Naive thymus-derived CD8-positive, alpha-beta T cell (primary cell): ENCODE measurements at regions of chr18 and their contacts with region 1.

Region 1: GRCh38 chr18:67417864-67418523 is 98.5 kb downstream of the DSEL start:
- DNase-seq: peak in 6 of 10 donors; percentile 6 to 65 (median 33)
- ATAC-seq: peak; percentile 92 to 95
- H3K4me3 Mint-ChIP-seq: peak overlapping the region; percentile 68 to 86 (median 80)
- H3K27ac Mint-ChIP-seq: peak overlapping the region; percentile 24 to 92 (median 87)
- H3K4me1 Mint-ChIP-seq: peaks cover 3 to 14% (median 9%) of the 10 kb centered on the region in 4 donors
- H3K27me3 Mint-ChIP-seq: no peaks in the 10 kb centered on the region

Region 2: GRCh38 chr18:67363694-67364093 is 54.3 kb before region 1 on chr18:
- POLR2A ChIA-PET with region 1: interaction called, 11 read pairs
- DNase-seq: no peak
- ATAC-seq: no peak
- H3K4me3 Mint-ChIP-seq: no peak overlapping the region
- H3K27ac Mint-ChIP-seq: peak overlapping the region in 1 of 10 donors; percentile 76
- H3K4me1 Mint-ChIP-seq: peaks cover 0 to 11% (median 6%) of the 10 kb centered on the region in 4 donors
- H3K27me3 Mint-ChIP-seq: peaks cover 0 to 1% (median 0%) of the 10 kb centered on the region in 5 donors

Region 3: GRCh38 chr18:67385455-67385854 is 32.5 kb before region 1 on chr18:
- POLR2A ChIA-PET with region 1: no interaction called
- DNase-seq: no peak
- ATAC-seq: no peak
- H3K4me3 Mint-ChIP-seq: no peak overlapping the region
- H3K27ac Mint-ChIP-seq: no peak overlapping the region
- H3K4me1 Mint-ChIP-seq: peaks cover 0 to 10% (median 3%) of the 10 kb centered on the region in 4 donors
- H3K27me3 Mint-ChIP-seq: no peaks in the 10 kb centered on the region